Cardiac septum (tissue), 1 donor: ENCODE measurements at regions of chr12 and their contacts with region 1.

Region 1: GRCh38 chr12:64451687-64452558 is at the start of gene TBK1:
- DNase-seq: peak; percentile 96
- total RNA-seq, gene TBK1: 13.8 TPM

Region 2: DNA sequence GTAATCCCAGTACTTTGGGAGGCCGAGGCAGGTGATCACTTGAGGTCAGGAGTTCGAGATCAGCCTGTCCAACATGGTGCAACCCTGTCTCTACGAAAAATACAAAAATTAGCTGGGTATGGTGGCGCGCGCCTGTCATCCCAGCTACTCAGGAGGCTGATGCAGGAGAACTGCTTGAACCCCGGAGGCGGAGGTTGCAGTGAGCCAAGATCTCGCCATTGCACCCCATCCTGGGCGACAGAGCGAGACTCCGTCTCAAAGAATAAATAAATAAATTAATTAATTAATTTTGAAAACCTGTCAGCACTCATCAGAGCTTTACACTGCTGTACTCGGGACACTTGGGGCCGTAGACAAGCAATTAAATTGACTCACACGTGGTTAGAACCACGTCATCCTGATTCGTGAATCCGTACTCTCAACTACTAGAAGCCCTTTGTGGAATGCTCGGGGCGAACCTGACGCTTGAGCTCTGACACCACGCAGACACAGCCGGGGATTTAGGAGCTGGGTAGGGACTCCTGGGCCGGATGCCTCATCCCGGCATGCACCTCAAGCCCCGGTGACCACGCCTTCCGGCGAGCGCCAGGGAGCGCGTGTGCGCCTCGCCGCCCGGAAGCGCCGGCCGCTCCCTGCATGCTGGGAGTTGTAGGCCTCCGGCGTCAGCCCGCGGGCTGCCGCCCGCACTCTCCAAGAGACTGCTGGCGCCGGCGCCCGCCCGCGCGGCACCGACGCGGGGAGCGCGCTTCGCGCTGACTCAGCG is 48.0 kb before region 1 on chr12 and contains the start of gene XPOT:
- intact Hi-C with region 1: loop called (anchors 2 kb)
- DNase-seq: peak; percentile 97
- total RNA-seq, gene XPOT: 30.6 TPM